IMR-90 (cell line): ENCODE measurements at regions of chr9 and their contacts with region 1.

Region 1: GRCh38 chr9:81649475-81650240 is 39.7 kb downstream of the TLE1 start:
- DNase-seq: no peak
- ATAC-seq: no peak
- H3K4me3 ChIP-seq: no peak overlapping the region
- H3K27ac ChIP-seq: no peak overlapping the region
- H3K4me1 ChIP-seq: peaks cover 12% of the 10 kb centered on the region
- H3K27me3 ChIP-seq: no peaks in the 10 kb centered on the region
- CTCF ChIP-seq: no peak
- POLR2A ChIP-seq: no peak
- RAD21 ChIP-seq: no peak

Region 2: GRCh38 chr9:81671880-81672280 is 22.2 kb after region 1 on chr9:
- CTCF ChIA-PET with region 1: interaction called, 3 read pairs
- POLR2A ChIA-PET with region 1: no interaction called
- dilution Hi-C with region 1: no loop called
- in situ Hi-C with region 1: no loop called
- intact Hi-C with region 1: loop called (anchors 1 kb)
- DNase-seq: peak; percentile 70
- ATAC-seq: peak; percentile 67
- H3K4me3 ChIP-seq: no peak overlapping the region
- H3K27ac ChIP-seq: no peak overlapping the region
- H3K4me1 ChIP-seq: peaks cover 8% of the 10 kb centered on the region; the same call in 1 of the 2 replicates
- H3K27me3 ChIP-seq: no peaks in the 10 kb centered on the region
- CTCF ChIP-seq: no peak
- POLR2A ChIP-seq: no peak
- RAD21 ChIP-seq: no peak